Thyroid gland (tissue), 4 donors: ENCODE measurements at regions of chr10 and their contacts with region 1.

Region 1: DNA sequence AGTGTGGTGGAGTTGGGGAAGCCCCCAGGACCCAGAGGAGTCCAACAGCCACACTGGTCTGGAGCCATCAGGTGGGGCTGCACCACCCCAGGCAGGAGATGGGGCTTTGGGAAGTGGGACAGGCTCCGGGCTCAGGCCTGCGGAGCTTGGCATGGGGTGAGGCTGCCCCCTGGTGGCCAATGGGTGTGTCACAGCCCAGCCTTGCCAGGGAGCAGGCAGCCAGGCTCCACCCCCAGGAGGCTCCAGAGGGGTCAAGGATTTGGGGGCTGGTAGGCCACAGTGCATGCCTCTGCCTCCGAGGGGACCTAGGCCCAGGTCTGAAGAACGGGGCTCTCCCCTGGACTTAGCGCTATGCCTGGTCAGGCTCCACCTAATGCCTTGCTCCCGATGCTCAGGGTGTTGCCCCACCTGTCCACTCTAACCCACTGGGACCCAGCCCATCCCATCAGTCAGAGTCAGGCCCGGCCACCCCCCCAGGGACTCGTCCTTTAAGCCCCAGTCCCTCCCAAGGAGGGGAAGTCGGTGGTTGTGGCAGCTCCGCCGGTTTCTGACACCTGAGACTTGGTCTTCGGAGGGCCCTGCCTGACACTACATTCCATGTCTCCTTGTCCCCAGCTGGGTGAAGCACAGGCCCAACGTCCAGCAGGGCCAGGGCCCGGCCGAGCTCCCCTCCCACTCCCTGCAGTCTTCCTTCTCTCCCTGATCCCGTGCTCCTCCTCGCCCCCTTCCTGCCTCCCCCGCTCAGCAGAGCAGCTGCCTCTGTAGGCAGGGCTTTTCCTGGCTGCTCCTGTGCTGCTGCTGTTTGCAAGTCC is 11.3 kb upstream of the SAMD8 start:
- DNase-seq: peak; percentile 70 to 71
- H3K4me3 ChIP-seq: no peak overlapping the region
- H3K27ac ChIP-seq: no peak overlapping the region
- H3K4me1 ChIP-seq: peaks cover 0 to 6% of the 10 kb centered on the region in 2 donors
- H3K27me3 ChIP-seq: no peaks in the 10 kb centered on the region
- CTCF ChIP-seq: peak; percentile 95 to 99 (median 98)
- POLR2A ChIP-seq: no peak

Region 2: GRCh38 chr10:74244097-74244685 is 856.0 kb before region 1 on chr10:
- intact Hi-C with region 1: loop called (anchors 2 kb)
- DNase-seq: peak in 1 of 2 donors; percentile 21
- H3K4me3 ChIP-seq: no peak overlapping the region
- H3K27ac ChIP-seq: no peak overlapping the region
- H3K4me1 ChIP-seq: no peaks in the 10 kb centered on the region
- H3K27me3 ChIP-seq: no peaks in the 10 kb centered on the region
- CTCF ChIP-seq: peak in 5 of 6 experiments; percentile 11 to 61 (median 59)
- POLR2A ChIP-seq: no peak

Region 3: DNA sequence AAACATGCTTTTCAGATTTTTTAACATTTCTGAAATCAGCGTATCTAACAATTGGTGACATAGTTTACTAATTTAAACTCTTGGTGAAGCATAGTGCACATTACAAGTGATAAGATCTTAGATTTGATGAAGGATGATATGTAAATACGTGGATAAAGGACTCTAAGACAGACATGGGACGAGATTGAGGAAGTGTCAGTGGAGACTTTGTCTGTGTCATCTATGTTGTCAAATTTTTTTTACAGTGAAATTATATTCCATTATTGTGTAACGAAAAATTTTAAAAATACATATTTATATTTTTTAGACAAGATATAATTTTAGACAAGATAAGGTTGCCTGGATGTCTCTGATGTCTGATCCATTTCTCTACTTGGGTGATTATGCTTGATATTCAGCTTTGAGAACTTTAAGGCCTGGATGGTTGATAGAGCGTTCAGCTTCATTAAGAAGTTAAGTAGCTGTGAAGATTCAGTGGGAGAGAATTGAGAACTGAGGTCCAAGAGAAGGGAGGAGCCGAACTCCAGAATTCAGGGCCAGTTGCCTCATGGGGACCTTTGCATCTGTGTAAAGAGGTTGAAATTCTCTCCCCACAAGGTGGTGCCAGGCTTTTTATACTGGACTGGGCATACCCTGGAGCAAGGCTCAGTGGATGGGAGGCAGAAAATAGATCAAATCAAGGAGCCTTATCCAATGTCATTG is 211.0 kb before region 1 on chr10:
- intact Hi-C with region 1: loop called (anchors 10 kb)
- DNase-seq: peak; percentile 76 to 80
- H3K4me3 ChIP-seq: no peak overlapping the region
- H3K27ac ChIP-seq: peak overlapping the region; percentile 46 to 62 (median 55)
- H3K4me1 ChIP-seq: peaks cover 38 to 44% of the 10 kb centered on the region in 2 donors
- H3K27me3 ChIP-seq: no peaks in the 10 kb centered on the region
- CTCF ChIP-seq: peak in 4 of 6 experiments; percentile 38 to 58 (median 44)
- POLR2A ChIP-seq: no peak

Region 4: GRCh38 chr10:75294866-75295701 is 194.9 kb after region 1 on chr10:
- intact Hi-C with region 1: no loop called
- DNase-seq: peak; percentile 78 to 80
- H3K4me3 ChIP-seq: peak overlapping the region; percentile 59 to 91 (median 73)
- H3K27ac ChIP-seq: peak overlapping the region; percentile 80 to 85 (median 85)
- H3K4me1 ChIP-seq: peaks cover 5 to 21% of the 10 kb centered on the region in 2 donors
- H3K27me3 ChIP-seq: no peaks in the 10 kb centered on the region
- CTCF ChIP-seq: peak in 3 of 6 experiments; percentile 31 to 38 (median 36)
- POLR2A ChIP-seq: peak in 1 of 2 donors; percentile 29